ENCODE measurements at regions of chr14 and their contacts with region 1.

Region 1: DNA sequence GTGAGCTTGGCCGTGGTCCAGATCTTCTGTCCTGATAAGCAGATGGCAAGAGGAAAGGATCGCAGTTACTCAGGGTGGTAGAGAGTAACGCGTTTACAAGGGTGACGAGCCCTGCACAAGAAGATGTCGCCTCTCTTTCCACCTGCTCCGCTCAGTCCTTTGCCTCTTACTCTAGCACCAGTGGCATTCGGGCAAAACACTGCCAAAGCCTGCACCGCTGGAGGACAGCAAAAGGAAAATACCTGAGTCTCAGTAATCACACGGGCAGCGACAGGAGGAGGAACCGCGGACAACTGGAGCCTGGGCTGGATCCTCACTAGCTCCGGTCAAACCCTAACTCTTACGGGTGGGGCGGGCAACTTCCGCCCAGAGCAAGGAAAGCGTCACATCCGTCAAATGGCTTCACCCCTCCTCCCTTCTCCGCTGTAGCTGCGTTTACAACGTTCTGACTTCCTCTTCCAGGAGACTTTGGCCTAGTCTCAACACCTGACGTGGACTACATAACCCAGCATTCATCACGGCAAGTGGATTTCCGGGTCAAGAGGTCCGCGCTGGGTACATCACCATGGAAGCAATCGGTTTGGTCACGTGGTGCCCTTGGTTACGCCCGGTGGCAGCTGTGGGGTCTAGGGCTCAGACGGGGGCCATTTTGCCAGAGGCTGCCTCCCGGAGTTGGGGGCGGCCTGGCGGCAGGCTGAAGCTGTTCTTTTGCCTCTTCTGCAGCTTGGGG is at the starts of genes KLHL28 and TOGARAM1:
- DNase-seq: peak; percentile 98
- total RNA-seq, gene KLHL28: 16.0 to 16.4 TPM
- total RNA-seq, gene TOGARAM1: 12.9 to 17.0 TPM

Region 2: DNA sequence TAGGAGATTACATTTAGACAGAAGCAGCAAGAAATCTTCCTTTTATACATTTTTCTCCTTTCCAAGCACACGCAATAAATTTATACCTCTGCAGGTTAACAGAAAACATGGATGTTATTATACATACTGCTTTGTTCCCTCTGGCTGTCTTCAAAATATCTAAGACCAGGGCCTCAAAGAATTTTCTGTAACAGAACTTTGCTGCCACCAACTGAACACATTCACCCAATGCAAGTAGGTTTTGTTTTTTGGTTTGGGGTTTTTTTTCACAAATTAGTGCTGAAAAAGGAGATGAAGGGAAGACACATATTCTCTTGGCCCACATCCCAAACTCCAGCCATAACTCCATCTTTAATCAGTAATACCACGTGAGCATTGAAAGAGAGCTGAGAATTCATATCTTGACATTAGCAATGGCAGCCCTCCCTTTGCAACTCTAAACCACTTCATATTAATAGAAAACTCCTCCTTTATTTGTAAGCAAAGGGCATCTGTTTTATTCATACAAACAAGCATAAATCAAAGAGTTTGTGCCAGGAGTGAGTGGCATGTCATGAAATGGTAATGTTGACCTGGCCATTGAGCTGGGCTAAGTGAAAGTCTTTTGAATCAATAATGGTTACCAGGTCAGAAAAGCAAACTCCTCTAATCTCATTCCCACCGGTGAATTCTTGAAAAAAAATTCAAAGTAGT is 303.9 kb before region 1 on chr14:
- intact Hi-C with region 1: no loop called
- DNase-seq: no peak

Region 3: DNA sequence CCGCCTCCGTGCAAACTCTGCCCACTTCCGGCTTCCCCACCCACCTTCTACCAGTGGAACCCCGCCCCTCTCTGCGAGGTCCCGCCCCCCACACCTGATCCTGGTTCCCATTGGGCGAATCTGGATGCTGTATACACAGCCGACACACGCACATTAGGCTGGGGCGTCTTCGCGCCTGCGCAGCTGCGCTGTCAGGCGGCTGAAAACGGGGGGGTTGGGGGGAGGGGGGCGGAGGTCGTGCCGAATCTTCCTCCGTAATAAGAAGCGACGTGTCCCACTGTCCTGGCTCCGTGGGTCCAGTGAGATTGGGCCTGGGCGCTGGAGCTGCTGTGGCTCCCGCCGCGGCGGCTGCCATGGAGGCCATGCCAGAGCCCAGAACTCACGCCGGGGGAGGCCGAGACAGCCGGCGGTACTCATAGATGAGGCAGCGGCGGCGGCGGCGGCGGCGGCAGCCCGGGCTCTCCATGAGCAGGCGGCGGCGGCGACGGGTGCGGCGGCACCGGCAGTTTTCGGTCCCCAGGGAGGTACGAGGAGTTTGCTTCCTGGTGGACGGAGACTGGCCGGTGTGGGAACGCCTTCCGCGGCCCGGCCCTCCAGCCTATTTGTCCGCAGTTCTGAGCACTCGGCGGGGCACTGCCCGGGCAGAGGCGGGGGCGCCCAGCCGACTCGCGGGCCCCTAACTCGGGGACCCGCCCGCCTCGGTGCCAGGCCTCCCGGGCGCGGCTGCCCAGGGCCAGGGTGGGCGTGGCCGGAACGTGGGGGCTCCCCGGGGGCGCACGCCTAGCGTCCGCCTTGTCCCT is 64.5 kb before region 1 on chr14:
- intact Hi-C with region 1: loop called in 1 of 2 experiments (anchors 5 kb)
- DNase-seq: peak; percentile 99

Region 4: DNA sequence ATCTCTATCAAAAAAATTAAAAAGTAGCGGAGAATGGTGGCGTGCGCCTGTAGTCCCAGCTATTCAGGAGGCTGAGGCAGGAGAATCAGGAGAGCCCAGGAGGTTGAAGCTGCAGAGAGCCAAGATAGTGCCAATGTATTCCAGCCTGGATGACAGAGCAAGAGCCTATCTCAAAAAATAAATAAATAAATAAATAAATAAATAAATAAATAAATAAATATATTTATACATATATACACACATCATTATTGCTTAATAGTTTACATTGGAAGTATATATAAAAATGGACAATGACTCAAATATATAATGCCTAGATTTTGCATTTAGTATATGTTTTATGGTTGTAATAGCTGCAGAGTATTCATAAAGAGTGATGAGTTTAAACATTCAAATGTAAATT is 53.4 kb after region 1 on chr14:
- intact Hi-C with region 1: no loop called
- DNase-seq: no peak

Region 5: DNA sequence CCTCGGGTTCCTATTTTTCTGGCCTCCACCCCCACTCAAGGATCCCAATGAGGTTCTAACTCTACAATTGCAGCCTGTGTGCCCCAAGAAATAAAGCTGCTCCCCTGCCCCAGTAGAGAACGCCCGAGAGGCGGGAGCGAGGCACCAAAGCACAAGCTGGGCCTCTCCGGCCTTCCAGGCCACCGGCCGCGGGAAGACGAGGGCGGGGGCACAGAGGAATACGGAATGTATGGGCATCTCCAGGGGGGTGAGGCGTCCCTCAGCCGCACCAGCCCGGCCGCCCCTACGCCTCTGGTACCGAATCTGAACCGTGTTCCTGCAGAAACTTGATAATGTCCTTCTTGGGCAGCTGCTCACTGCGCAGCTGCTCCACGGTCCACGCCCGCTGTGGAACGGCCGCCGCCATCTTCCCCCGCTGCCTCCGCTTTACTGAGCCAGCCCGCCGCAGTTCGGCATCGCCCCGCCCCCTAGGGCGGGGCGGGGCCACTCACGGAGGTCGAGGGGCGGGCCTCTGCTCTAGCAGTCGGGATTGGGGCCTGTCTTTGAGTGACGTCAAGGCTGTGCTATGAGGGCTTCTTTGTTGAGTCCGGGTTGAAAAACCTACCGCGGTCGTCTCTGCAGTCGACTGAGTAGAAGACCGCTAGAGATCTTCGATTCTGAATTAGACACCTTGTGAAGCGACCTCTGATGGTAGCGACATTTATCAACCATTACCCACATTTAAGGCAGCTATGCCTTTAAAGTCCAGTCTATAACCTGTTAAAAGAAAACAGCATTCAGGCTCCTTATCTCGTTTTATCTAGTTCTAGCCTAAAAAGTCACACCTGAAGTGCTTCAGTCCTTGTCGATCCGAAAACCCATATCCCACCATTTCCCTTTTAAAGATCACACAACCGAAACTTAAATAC is 172.5 kb after region 1 on chr14 and contains the start of gene FKBP3:
- intact Hi-C with region 1: loop called in 1 of 2 experiments (anchors 10 kb)
- DNase-seq: peak; percentile 98
- total RNA-seq, gene FKBP3: 42.8 to 45.7 TPM